Right ventricle myocardium superior (tissue), 1 donor: ENCODE measurements at regions of chr13 and their contacts with region 1.

Region 1: GRCh38 chr13:51583875-51584730 is at the start of gene WDFY2:
- DNase-seq: peak; percentile 99
- ATAC-seq: peak; percentile 96
- total RNA-seq, gene WDFY2: 4.0 TPM

Region 2: DNA sequence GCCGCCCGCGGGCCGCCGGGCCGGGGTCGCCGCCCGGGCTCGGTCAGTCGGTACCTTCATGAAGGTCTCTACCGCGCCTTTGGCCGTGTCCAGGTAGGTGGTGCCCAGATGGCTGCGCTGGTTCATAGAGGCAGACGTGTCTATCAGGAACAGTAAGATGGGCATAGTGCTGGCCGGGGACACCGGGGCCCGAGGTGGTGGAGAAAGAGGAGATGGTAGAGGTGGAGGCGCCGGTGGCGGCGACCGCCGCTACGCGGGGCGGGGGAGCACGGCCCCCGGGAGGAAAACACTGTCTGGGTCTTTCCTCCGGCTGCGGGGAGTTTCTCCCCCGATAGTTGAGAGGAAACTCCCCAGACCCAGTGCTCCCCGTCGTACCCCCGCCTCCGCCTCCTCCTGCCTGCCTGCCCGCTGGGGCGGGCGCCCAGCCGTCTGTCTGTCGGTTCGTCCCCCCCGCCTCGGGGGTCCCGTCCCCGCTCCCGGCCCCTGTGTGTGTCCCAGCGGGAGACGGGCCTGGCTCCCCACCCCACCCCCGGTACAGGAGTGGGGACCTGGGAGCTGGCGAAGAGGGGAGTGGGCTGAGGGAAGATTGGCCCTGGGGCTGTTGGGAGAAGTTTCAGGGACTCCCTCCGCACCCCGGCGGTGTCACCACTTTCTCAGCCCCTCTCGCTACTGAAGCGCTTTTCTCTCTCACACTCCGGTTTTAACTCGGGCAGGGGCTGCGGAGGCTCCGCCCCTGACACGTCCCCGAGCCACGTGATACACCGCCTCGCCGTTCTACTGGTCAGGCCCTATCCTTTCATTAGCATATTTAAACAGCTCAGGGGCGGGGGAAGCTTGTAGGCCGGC is 131.5 kb before region 1 on chr13 and contains the start of gene INTS6:
- intact Hi-C with region 1: loop called (anchors 2 kb)
- DNase-seq: peak; percentile 99
- ATAC-seq: peak; percentile 90
- total RNA-seq, gene INTS6: 28.3 TPM

Region 3: DNA sequence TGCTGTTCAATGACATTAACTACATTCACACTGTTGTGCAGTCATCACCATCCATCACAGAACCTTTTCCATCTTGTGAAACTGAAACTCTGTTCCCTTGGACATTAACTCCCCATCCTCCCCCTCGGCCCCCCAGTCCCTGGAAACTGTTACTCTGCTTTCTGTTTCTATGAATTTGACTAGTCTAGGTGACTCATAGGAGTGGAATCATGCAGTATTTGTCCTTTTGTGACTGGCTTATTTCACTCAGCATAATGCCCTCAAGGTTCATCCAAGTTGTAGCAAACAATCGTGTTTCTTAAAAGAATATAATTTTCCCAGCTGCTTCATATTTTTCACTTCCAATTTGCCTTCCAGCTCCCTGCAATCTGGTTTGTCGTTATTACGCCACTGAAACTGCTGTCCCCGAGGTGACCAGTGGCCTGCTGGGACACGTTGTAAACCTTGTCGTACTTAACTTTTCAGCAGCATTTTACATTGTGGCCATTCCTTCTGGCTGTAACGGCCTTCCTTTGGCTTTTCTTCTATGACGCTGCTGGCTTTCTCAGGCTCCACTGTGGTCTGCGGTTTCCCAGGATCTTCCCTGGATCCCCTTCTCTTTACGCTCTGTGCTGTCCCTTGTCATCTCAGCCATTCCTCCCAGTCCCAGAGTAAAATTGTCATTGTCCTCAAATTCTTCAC is 145.9 kb after region 1 on chr13:
- intact Hi-C with region 1: loop called (anchors 5 kb)
- DNase-seq: no peak
- ATAC-seq: peak; percentile 56

Region 4: GRCh38 chr13:51803422-51804294 is 219.6 kb after region 1 on chr13 and contains the start of gene DHRS12:
- intact Hi-C with region 1: loop called (anchors 10 kb)
- DNase-seq: peak; percentile 95
- ATAC-seq: peak; percentile 89
- total RNA-seq, gene DHRS12: 10.4 TPM